ENCODE measurements at regions of chr15 and their contacts with region 1.

Region 1: GRCh38 chr15:80173022-80173759 is 20.4 kb downstream of the FAH start:
- DNase-seq: peak; percentile 59
- ATAC-seq: peak; percentile 85
- H3K4me3 Mint-ChIP-seq: no peak overlapping the region
- H3K27ac Mint-ChIP-seq: peak overlapping the region; percentile 35
- H3K4me1 Mint-ChIP-seq: no peaks in the 10 kb centered on the region
- H3K27me3 Mint-ChIP-seq: no peaks in the 10 kb centered on the region
- CTCF ChIP-seq: no peak

Region 2: DNA sequence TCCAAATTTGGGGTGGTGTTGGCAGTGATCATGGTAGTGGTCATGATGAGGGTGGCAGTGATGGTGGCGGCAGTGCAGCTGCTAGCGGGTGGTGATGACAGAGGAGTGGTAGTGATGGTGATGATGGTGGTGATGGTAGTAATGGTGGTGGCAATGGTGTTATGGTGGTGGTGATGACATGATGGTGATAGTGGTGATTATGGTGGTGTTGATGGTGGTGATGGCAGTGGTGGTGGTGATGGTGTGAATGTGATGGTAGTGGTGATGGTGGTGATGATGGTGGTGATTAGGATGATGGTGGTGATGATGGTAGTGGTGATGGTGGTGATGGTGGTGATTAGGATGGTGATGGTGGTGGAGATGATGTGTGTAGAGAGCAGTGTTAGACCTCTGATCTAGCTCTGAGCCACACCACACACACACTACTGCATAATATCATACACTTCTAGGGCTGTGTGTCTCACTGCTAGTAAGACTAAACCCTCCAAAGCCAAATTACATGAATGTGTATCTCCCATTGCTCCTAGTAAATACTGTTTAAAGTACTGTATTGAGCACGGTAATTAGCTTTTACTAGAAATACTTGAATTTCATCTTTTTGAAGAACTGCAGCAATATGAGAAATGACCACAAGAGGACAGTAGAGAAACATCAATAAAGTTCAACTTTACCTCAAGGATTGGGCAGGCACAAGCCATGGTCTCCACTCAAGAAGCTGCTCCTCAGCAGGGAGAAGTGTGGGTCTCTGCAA is 833.5 kb before region 1 on chr15:
- CTCF ChIA-PET with region 1: interaction called, 4 read pairs
- POLR2A ChIA-PET with region 1: no interaction called
- intact Hi-C with region 1: loop called (anchors 1 kb)
- DNase-seq: no peak
- ATAC-seq: no peak
- H3K4me3 Mint-ChIP-seq: no peak overlapping the region
- H3K27ac Mint-ChIP-seq: no peak overlapping the region
- H3K4me1 Mint-ChIP-seq: no peaks in the 10 kb centered on the region
- H3K27me3 Mint-ChIP-seq: no peaks in the 10 kb centered on the region
- CTCF ChIP-seq: no peak

Region 3: GRCh38 chr15:79769069-79769481 is 404.1 kb before region 1 on chr15:
- CTCF ChIA-PET with region 1: no interaction called
- POLR2A ChIA-PET with region 1: no interaction called
- intact Hi-C with region 1: loop called (anchors 1 kb)
- DNase-seq: no peak
- ATAC-seq: no peak
- H3K4me3 Mint-ChIP-seq: no peak overlapping the region
- H3K27ac Mint-ChIP-seq: no peak overlapping the region
- H3K4me1 Mint-ChIP-seq: no peaks in the 10 kb centered on the region
- H3K27me3 Mint-ChIP-seq: peaks cover 8% of the 10 kb centered on the region
- CTCF ChIP-seq: no peak

Measured in activated B cell treated with CpG ODN at 0.5 μM for 24 hours (primary cell).